GM10248 (cell line): ENCODE measurements at regions of chr7 and their contacts with region 1.

Region 1: GRCh38 chr7:132654150-132654549 is 77.9 kb upstream of the PLXNA4 start:
- DNase-seq: peak; percentile 59
- CTCF ChIP-seq: peak; percentile 31

Region 2: GRCh38 chr7:132666071-132666774 is 12.1 kb after region 1 on chr7:
- CTCF ChIA-PET with region 1: interaction called, 15 read pairs
- POLR2A ChIA-PET with region 1: no interaction called
- DNase-seq: no peak
- CTCF ChIP-seq: no peak